ENCODE measurements at regions of chr14 and their contacts with region 1.

Region 1: GRCh38 chr14:64266239-64266638 is 27.9 kb downstream of the ESR2 start:
- DNase-seq: no peak
- ATAC-seq: no peak
- H3K4me3 ChIP-seq: no peak overlapping the region
- H3K4me3 Mint-ChIP-seq: no peak overlapping the region
- H3K27ac ChIP-seq: no peak overlapping the region
- H3K27ac Mint-ChIP-seq: peak overlapping the region; percentile 11
- H3K4me1 ChIP-seq: peaks cover 14 to 15% of the 10 kb centered on the region in 2 donors
- H3K4me1 Mint-ChIP-seq: peaks cover 27% of the 10 kb centered on the region
- H3K27me3 ChIP-seq: no peaks in the 10 kb centered on the region
- H3K27me3 Mint-ChIP-seq: no peaks in the 10 kb centered on the region
- CTCF ChIP-seq: no peak

Region 2: GRCh38 chr14:64170181-64170580 is 96.1 kb before region 1 on chr14:
- CTCF ChIA-PET with region 1: no interaction called
- POLR2A ChIA-PET with region 1: no interaction called
- intact Hi-C with region 1: no loop called
- DNase-seq: peak; percentile 71
- ATAC-seq: peak; percentile 92
- H3K4me3 ChIP-seq: no peak overlapping the region
- H3K4me3 Mint-ChIP-seq: peak overlapping the region; percentile 32
- H3K27ac ChIP-seq: no peak overlapping the region
- H3K27ac Mint-ChIP-seq: peak overlapping the region; percentile 54
- H3K4me1 ChIP-seq: peaks cover 6 to 7% of the 10 kb centered on the region in 2 donors
- H3K4me1 Mint-ChIP-seq: peaks cover 15% of the 10 kb centered on the region
- H3K27me3 ChIP-seq: no peaks in the 10 kb centered on the region
- H3K27me3 Mint-ChIP-seq: no peaks in the 10 kb centered on the region
- CTCF ChIP-seq: no peak

Region 3: DNA sequence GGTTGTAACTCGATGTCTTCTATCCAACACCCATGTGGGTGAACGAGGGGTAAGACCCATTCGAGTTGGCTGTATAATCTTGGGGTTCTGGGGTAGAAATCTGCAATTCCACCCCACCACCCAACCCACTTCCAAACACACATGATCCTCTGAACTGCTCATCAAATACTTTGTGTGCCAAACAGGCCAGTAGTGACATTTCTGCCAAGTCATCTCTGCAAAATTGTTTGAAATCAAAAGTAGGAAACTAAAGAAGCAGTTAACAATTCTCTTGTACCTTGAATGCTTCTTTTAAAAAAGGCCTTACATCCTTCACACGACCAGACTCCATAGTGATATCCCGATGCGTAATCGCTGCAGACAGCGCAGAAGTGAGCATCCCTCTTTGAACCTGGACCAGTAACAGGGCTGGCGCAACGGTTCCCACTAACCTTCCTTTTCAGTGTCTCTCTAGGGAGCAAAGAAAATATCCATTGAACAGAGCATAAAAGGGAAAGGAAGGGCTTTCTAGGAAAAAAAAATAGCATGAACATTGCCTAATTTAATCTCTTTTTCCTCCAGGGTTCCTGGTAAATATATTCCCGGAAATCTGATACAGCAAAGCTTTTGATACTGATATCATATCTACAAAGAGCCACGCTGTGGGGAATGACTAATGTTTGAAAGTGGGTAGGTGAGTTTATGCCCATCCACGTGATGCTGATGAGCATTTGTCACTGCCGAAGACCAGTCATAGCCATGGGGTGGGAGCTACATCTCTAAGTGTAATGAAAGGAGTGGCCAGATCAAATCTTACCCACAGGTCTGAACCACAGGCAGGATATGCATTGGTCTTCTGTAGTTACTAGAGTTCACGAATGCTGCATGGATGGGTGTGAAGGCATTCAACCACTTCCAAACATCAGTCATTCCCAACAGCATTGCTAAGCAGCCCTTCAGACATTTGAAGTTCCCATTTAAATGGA is 13.7 kb after region 1 on chr14:
- CTCF ChIA-PET with region 1: no interaction called
- POLR2A ChIA-PET with region 1: interaction called, 10 read pairs
- intact Hi-C with region 1: no loop called
- DNase-seq: no peak
- ATAC-seq: no peak
- H3K4me3 ChIP-seq: no peak overlapping the region
- H3K4me3 Mint-ChIP-seq: no peak overlapping the region
- H3K27ac ChIP-seq: no peak overlapping the region
- H3K27ac Mint-ChIP-seq: no peak overlapping the region
- H3K4me1 ChIP-seq: peaks cover 0 to 3% of the 10 kb centered on the region in 2 donors
- H3K4me1 Mint-ChIP-seq: peaks cover 11% of the 10 kb centered on the region
- H3K27me3 ChIP-seq: no peaks in the 10 kb centered on the region
- H3K27me3 Mint-ChIP-seq: no peaks in the 10 kb centered on the region
- CTCF ChIP-seq: no peak